ENCODE measurements at regions of chr10 and their contacts with region 1.

Region 1: GRCh38 chr10:80444646-80445319 is 9.3 kb upstream of the TSPAN14 start:
- DNase-seq: peak; percentile 55
- ATAC-seq: peak; percentile 85
- H3K4me3 Mint-ChIP-seq: no peak overlapping the region
- H3K27ac Mint-ChIP-seq: peak overlapping the region; percentile 52
- H3K4me1 Mint-ChIP-seq: peaks cover 45% of the 10 kb centered on the region
- H3K27me3 Mint-ChIP-seq: no peaks in the 10 kb centered on the region
- CTCF ChIP-seq: peak; percentile 51

Region 2: GRCh38 chr10:80421707-80422536 is 22.9 kb before region 1 on chr10:
- CTCF ChIA-PET with region 1: interaction called, 20 read pairs
- POLR2A ChIA-PET with region 1: no interaction called
- intact Hi-C with region 1: no loop called
- DNase-seq: no peak
- ATAC-seq: no peak
- H3K4me3 Mint-ChIP-seq: no peak overlapping the region
- H3K27ac Mint-ChIP-seq: no peak overlapping the region
- H3K4me1 Mint-ChIP-seq: no peaks in the 10 kb centered on the region
- H3K27me3 Mint-ChIP-seq: no peaks in the 10 kb centered on the region
- CTCF ChIP-seq: no peak

Region 3: GRCh38 chr10:80459047-80459931 is 14.5 kb after region 1 on chr10:
- CTCF ChIA-PET with region 1: interaction called, 31 read pairs
- POLR2A ChIA-PET with region 1: interaction called, 5 read pairs
- intact Hi-C with region 1: no loop called
- DNase-seq: peak; percentile 90
- ATAC-seq: peak; percentile 60
- H3K4me3 Mint-ChIP-seq: peak overlapping the region; percentile 86
- H3K27ac Mint-ChIP-seq: peak overlapping the region; percentile 95
- H3K4me1 Mint-ChIP-seq: peaks cover 78% of the 10 kb centered on the region
- H3K27me3 Mint-ChIP-seq: no peaks in the 10 kb centered on the region
- CTCF ChIP-seq: no peak

Region 4: GRCh38 chr10:80504158-80504811 is 59.5 kb after region 1 on chr10:
- CTCF ChIA-PET with region 1: interaction called, 1,114 read pairs
- POLR2A ChIA-PET with region 1: interaction called, 27 read pairs
- intact Hi-C with region 1: loop called (anchors 1 kb)
- DNase-seq: no peak
- ATAC-seq: no peak
- H3K4me3 Mint-ChIP-seq: no peak overlapping the region
- H3K27ac Mint-ChIP-seq: peak overlapping the region; percentile 82
- H3K4me1 Mint-ChIP-seq: peaks cover 61% of the 10 kb centered on the region
- H3K27me3 Mint-ChIP-seq: no peaks in the 10 kb centered on the region
- CTCF ChIP-seq: no peak

Region 5: GRCh38 chr10:80530251-80530650 is 85.5 kb after region 1 on chr10:
- CTCF ChIA-PET with region 1: interaction called, 10 read pairs
- POLR2A ChIA-PET with region 1: no interaction called
- intact Hi-C with region 1: no loop called
- DNase-seq: peak; percentile 78
- ATAC-seq: peak; percentile 90
- H3K4me3 Mint-ChIP-seq: peak overlapping the region; percentile 27
- H3K27ac Mint-ChIP-seq: peak overlapping the region; percentile 85
- H3K4me1 Mint-ChIP-seq: peaks cover 65% of the 10 kb centered on the region
- H3K27me3 Mint-ChIP-seq: no peaks in the 10 kb centered on the region
- CTCF ChIP-seq: peak; percentile 47

Measured in activated CD8-positive, alpha-beta T cell treated with anti-CD3 and anti-CD28 coated beads for 36 hours (primary cell).